ENCODE measurements at regions of chr1 and their contacts with region 1.

Region 1: GRCh38 chr1:67174716-67175284 is 8.5 kb downstream of the IL23R start:
- DNase-seq: peak; percentile 61
- ATAC-seq: peak; percentile 70
- H3K4me3 Mint-ChIP-seq: peak overlapping the region; percentile 25
- H3K27ac Mint-ChIP-seq: peak overlapping the region; percentile 94
- H3K4me1 Mint-ChIP-seq: peaks cover 68% of the 10 kb centered on the region
- H3K27me3 Mint-ChIP-seq: no peaks in the 10 kb centered on the region

Region 2: DNA sequence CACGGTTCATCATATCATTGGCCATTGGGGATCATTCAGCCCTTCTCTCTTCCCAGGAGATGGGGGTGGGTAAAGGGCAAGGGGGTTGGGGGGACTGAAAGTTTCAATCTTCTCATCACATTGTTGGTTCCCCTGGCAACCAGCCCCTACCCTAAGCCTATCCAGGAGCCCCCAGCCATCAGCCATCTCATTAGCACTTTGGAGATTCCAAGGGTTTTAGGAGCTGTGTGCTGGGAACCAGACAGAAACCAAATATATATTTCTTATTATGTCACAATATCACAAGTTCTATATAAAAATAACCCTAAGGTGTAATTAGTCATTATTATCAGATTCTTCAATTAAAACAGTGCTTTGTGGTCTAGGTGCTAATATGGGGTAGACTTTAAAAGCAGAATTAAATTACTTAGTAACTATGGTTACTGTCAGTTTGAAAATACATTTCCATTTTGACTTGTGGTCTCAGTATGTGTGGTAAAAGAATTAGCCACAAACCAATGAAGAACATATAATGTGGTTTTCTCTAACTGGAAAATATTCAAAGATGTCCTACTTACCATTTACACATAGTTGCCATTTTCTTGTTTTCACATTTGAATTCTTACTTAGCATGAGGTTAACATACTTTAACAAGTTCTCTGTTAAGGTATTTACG is 19.5 kb after region 1 on chr1:
- CTCF ChIA-PET with region 1: interaction called, 12 read pairs
- POLR2A ChIA-PET with region 1: interaction called, 43 read pairs
- intact Hi-C with region 1: loop called (anchors 1 kb)
- DNase-seq: no peak
- ATAC-seq: peak; percentile 24
- H3K4me3 Mint-ChIP-seq: no peak overlapping the region
- H3K27ac Mint-ChIP-seq: peak overlapping the region; percentile 60
- H3K4me1 Mint-ChIP-seq: peaks cover 21% of the 10 kb centered on the region
- H3K27me3 Mint-ChIP-seq: no peaks in the 10 kb centered on the region